HEK293 (cell line): ENCODE measurements at regions of chr7 and their contacts with region 1.

Region 1: DNA sequence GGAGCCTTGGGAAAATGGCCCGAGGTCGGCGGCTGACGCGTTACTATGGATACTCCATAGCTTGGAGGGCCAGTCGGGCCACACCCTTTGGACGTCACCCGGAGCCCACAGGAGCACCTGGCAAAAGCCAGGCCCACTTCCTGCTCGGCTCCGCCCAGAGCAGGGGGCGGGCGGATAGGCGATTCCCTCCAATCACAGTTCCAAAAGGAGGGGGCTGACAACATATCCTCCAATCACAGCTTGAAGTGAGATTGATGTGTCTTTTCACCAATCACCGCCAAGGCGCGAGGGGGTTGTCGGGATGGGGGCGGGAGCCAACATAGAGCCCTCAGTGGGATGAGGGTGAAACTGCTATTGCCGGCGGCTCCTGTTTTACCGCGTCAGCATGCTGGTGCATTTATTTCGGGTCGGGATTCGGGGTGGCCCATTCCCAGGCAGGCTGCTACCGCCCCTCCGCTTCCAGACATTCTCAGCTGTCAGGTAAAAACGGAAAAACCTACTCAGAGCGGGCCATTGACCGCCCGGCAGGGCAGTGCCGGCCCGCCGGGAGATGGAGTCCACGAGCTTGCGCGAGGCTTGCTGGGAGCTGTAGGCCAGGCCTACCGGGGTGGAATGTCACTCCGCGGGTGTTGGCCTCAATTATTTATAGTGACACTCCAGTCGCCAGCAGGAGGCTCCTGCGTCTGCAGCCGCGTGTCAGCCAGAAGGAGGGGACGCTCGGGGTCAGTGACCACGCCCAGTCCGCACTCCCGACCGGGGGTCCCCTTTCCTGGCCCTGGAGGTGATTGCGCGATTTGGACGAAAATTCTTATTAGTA is at the start of gene ABCB8:
- H3K4me3 ChIP-seq: peak within 1 kb of the TSS; percentile 84
- H3K27ac ChIP-seq: no peak within 1 kb of the TSS
- H3K4me1 ChIP-seq: no peaks in the 10 kb centered on the region
- CTCF ChIP-seq: peak; percentile 97

Region 2: DNA sequence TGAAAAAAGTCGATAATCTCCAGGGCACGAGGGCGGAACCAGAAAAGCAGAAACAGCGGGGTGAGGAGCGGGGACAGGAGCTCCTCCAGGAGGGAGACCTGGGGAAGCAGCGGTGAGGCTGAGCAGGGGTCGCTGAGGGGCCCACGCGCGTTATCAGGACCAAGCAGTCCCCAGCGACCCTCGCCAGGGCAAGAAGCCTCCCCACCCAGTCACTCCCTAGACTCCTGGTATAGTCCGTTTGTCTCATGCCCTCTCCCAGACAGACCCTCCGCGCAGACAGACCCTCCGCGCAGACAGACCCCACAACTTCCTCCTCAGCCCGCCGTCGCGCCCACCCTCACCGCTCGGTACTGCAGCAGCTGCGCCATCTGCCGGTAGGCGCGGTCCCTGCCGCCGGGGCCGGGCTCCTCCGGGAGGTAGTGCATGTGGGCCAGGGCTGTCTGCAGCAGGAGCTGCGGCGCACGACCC is 10.4 kb before region 1 on chr7:
- CTCF ChIA-PET with region 1: interaction called, 22 read pairs
- POLR2A ChIA-PET with region 1: interaction called, 8 read pairs
- H3K4me3 ChIP-seq: no peak overlapping the region
- H3K27ac ChIP-seq: no peak overlapping the region; the same call in 1 of the 2 replicates
- H3K4me1 ChIP-seq: no peaks in the 10 kb centered on the region
- CTCF ChIP-seq: peak; percentile 97

Region 3: DNA sequence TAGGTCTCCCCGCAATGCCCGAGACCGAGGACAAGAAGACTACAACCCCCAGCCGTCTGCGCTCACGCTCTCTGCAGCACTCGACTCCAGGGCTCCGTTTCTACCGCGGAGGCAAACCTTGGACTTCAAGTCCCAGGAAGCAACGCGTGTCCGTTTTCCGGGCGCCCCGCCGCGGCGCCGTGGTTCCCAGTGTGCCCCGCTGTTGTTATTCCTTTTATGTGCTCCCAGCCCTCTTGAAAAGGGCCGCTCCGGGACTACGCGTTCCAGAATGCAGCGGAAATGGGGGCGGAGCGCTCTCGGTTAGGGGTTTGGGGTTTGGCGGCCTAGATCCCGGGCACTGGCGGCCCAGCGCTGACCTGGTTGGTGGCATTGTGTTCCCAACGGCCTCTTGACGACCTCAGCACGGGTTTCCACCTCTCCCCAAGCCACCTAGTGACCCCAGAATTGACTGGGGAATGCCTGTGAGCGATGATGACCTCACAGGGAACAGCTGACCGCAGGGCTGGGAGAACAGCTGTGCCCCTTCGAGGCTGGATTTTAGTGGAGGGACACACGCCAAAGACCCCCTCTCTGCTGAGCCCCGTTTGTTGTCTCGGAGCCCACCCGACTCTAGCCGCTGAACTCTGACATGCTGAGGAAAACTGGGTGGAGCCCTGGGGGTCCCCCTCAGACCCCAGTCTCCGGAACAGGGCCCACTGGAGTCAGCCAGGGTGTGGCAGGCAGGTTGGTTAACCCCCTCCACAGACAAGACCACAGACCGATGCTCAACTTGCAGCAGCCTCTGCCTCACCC is 29.8 kb after region 1 on chr7:
- CTCF ChIA-PET with region 1: interaction called, 4 read pairs
- POLR2A ChIA-PET with region 1: interaction called, 13 read pairs
- H3K4me3 ChIP-seq: peak overlapping the region; percentile 49
- H3K27ac ChIP-seq: peak overlapping the region; percentile 48
- H3K4me1 ChIP-seq: no peaks in the 10 kb centered on the region; the same call in 1 of the 2 replicates
- CTCF ChIP-seq: no peak

Region 4: GRCh38 chr7:151085691-151086620 is 57.6 kb after region 1 on chr7 and contains the start of gene AGAP3:
- CTCF ChIA-PET with region 1: interaction called, 6 read pairs
- POLR2A ChIA-PET with region 1: interaction called, 16 read pairs
- H3K4me3 ChIP-seq: peak within 1 kb of the TSS; percentile 80
- H3K27ac ChIP-seq: peak within 1 kb of the TSS; percentile 82
- H3K4me1 ChIP-seq: peaks cover 7% of the 10 kb centered on the region
- CTCF ChIP-seq: no peak; the same call in 1 of the 2 replicates